CD8-positive, alpha-beta T cell (primary cell): ENCODE measurements at regions of chr7 and their contacts with region 1.

Region 1: GRCh38 chr7:43700059-43700501 is 29.2 kb downstream of the COA1 start:
- DNase-seq: peak in 2 of 9 experiments; percentile 69 to 80
- ATAC-seq: peak; percentile 73
- H3K4me3 ChIP-seq: no peak overlapping the region
- H3K4me3 Mint-ChIP-seq: peak overlapping the region; percentile 50
- H3K27ac ChIP-seq: no peak overlapping the region
- H3K27ac Mint-ChIP-seq: peak overlapping the region; percentile 84
- H3K4me1 ChIP-seq: peaks cover 37% of the 10 kb centered on the region
- H3K4me1 Mint-ChIP-seq: peaks cover 44% of the 10 kb centered on the region
- H3K27me3 ChIP-seq: no peaks in the 10 kb centered on the region
- H3K27me3 Mint-ChIP-seq: no peaks in the 10 kb centered on the region
- CTCF ChIP-seq: peak; percentile 85

Region 2: DNA sequence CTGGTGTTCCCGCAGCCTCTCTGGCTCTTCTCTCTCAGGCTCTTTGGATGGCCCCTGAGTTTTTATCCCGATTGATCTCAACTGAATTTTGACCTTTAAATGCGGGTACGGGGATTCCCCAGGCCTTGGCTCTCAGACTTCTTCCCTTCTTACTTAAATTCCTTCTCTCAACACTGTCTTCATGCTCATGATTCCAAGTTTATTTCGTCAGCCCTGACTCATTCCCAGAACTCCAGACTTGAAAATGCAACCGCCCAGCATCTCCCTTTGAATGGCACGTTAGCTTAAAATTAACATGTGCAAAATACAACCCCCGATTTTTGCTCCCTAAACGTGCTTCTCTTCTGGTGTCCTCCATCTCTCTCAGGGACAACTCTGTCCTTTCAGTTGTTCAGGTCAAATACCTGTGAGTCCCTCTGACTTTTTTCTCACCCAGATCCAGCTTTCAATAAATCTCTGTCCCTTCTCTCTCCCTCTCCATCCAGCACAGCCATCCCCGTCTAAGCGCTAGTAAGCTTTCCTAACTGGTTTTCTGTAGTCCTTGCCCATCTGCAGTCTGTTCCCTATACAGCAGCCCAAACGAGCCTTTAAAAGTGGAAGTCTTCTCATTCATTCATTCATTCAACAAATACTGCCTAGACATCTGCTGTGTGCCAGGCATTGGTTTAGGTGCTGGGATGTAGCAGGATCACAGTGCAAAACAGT is 580.6 kb before region 1 on chr7:
- CTCF ChIA-PET with region 1: no interaction called
- POLR2A ChIA-PET with region 1: no interaction called
- intact Hi-C with region 1: no loop called
- DNase-seq: no peak
- ATAC-seq: no peak
- H3K4me3 ChIP-seq: no peak overlapping the region
- H3K4me3 Mint-ChIP-seq: no peak overlapping the region
- H3K27ac ChIP-seq: no peak overlapping the region
- H3K27ac Mint-ChIP-seq: no peak overlapping the region
- H3K4me1 ChIP-seq: no peaks in the 10 kb centered on the region
- H3K4me1 Mint-ChIP-seq: no peaks in the 10 kb centered on the region
- H3K27me3 ChIP-seq: peaks cover 0 to 2% of the 10 kb centered on the region in 2 experiments
- H3K27me3 Mint-ChIP-seq: peaks cover 37% of the 10 kb centered on the region
- CTCF ChIP-seq: no peak

Region 3: GRCh38 chr7:43417455-43417854 is 282.6 kb before region 1 on chr7:
- CTCF ChIA-PET with region 1: no interaction called
- POLR2A ChIA-PET with region 1: no interaction called
- intact Hi-C with region 1: no loop called
- DNase-seq: no peak
- ATAC-seq: no peak
- H3K4me3 ChIP-seq: no peak overlapping the region
- H3K4me3 Mint-ChIP-seq: no peak overlapping the region
- H3K27ac ChIP-seq: no peak overlapping the region
- H3K27ac Mint-ChIP-seq: no peak overlapping the region
- H3K4me1 ChIP-seq: no peaks in the 10 kb centered on the region
- H3K4me1 Mint-ChIP-seq: no peaks in the 10 kb centered on the region
- H3K27me3 ChIP-seq: no peaks in the 10 kb centered on the region
- H3K27me3 Mint-ChIP-seq: peaks cover 19% of the 10 kb centered on the region
- CTCF ChIP-seq: no peak

Region 4: GRCh38 chr7:43454936-43455518 is 245.1 kb before region 1 on chr7:
- CTCF ChIA-PET with region 1: interaction called, 5 read pairs
- POLR2A ChIA-PET with region 1: no interaction called
- intact Hi-C with region 1: loop called in 1 of 2 experiments (anchors 5 kb)
- DNase-seq: peak in 2 of 9 experiments; percentile 15 to 36
- ATAC-seq: no peak
- H3K4me3 ChIP-seq: no peak overlapping the region
- H3K4me3 Mint-ChIP-seq: no peak overlapping the region
- H3K27ac ChIP-seq: no peak overlapping the region
- H3K27ac Mint-ChIP-seq: no peak overlapping the region
- H3K4me1 ChIP-seq: no peaks in the 10 kb centered on the region
- H3K4me1 Mint-ChIP-seq: peaks cover 5% of the 10 kb centered on the region
- H3K27me3 ChIP-seq: no peaks in the 10 kb centered on the region
- H3K27me3 Mint-ChIP-seq: peaks cover 4% of the 10 kb centered on the region
- CTCF ChIP-seq: peak; percentile 32

Region 5: DNA sequence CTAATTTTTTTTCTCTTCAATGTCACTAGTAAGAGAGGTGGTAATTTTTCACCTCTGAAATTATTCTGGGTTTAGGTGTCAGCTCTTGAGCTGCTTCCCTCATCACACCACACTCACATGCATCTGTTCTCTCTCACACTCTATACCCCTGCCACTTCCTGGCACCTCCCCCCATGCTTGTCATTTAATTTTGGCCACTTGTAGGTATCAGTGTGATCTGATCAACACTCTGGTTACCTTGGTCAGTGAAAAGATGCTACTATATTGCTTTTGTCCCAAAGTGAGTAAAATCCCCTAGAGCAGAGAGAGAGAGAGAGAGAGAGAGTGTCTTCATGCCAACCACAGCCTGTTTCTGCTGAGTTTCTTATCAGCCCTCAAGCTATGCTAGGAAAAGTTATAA is 74.6 kb before region 1 on chr7:
- CTCF ChIA-PET with region 1: interaction called, 20 read pairs
- POLR2A ChIA-PET with region 1: interaction called, 3 read pairs
- intact Hi-C with region 1: loop called in 1 of 2 experiments (anchors 1 kb)
- DNase-seq: peak; percentile 25 to 94 (median 61)
- ATAC-seq: peak; percentile 74
- H3K4me3 ChIP-seq: no peak overlapping the region
- H3K4me3 Mint-ChIP-seq: peak overlapping the region; percentile 71
- H3K27ac ChIP-seq: peak overlapping the region; percentile 23 to 75
- H3K27ac Mint-ChIP-seq: peak overlapping the region; percentile 94
- H3K4me1 ChIP-seq: peaks cover 94% of the 10 kb centered on the region
- H3K4me1 Mint-ChIP-seq: peaks cover 94% of the 10 kb centered on the region
- H3K27me3 ChIP-seq: no peaks in the 10 kb centered on the region
- H3K27me3 Mint-ChIP-seq: no peaks in the 10 kb centered on the region
- CTCF ChIP-seq: no peak

Region 6: DNA sequence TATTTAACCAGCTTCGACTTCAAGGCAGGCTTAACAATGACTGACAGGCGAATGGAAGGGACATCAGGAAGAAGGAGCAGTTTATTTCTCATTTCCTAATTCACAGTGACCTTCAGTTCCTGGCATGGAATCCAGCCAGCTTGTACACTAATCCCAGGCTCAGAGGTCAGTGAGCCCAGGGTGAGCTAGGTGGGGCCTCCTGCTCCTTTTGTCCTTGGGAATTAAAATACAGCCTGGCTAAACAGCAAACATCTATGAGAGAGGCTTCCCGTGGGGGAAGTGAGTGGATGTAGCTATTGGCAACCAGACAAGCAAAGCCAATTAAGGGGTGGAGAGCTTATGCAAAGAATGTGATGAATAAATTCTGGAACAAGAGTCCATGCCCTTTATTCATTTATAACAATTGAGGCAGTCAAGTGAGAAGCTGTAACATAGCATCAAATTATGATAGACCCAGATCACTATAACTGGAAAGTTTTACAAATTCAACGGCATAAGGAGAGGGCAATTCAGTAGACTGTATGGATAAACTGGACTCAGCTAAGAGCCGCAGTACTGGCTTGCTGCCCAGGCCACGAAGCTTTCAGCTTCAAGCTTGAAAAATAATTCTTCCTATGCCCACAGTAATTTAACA is 60.1 kb before region 1 on chr7:
- CTCF ChIA-PET with region 1: interaction called, 115 read pairs
- POLR2A ChIA-PET with region 1: interaction called, 6 read pairs
- intact Hi-C with region 1: no loop called
- DNase-seq: peak in 1 of 9 experiments; percentile 49
- ATAC-seq: no peak
- H3K4me3 ChIP-seq: no peak overlapping the region
- H3K4me3 Mint-ChIP-seq: peak overlapping the region; percentile 59
- H3K27ac ChIP-seq: peak overlapping the region; percentile 45 to 67
- H3K27ac Mint-ChIP-seq: peak overlapping the region; percentile 93
- H3K4me1 ChIP-seq: peaks cover 96% of the 10 kb centered on the region
- H3K4me1 Mint-ChIP-seq: peaks cover 97% of the 10 kb centered on the region
- H3K27me3 ChIP-seq: no peaks in the 10 kb centered on the region
- H3K27me3 Mint-ChIP-seq: no peaks in the 10 kb centered on the region
- CTCF ChIP-seq: no peak

Region 7: DNA sequence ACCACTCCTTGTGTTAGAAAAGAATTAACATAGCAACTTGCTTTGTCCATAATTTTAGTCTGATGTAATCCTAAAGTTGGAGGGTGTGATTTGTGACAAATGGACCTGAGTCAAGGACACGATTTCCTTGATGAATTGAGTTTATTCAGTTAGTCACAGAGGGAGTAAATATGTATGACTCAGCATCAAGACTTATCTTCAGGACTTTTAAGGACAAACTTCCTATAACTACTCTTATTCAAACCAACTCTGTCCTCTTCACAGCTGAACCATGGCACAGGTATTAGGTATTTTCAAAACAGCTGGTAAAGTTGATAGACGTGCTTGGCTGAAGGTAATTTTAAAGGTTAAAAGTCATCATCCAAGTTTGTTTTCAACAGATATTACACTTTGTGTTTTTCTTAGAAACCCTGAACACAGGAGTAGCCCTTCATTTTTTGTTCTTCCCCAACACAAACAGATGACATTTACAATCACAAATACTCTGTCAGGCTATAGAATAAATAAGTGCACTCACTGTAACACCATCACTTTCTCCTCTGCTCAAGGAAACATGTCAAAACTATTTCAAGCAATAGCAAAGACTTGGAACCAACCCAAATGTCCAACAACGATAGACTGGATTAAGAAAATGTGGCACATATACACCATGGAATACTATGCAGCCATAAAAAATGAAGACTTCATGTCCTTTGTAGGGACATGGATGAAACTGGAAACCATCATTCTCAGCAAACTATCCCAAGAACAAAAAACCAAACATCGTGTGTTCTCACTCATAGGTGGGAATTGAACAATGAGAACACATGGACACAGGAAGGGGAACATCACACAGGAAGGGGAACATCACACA is 25.3 kb before region 1 on chr7:
- CTCF ChIA-PET with region 1: interaction called, 7 read pairs
- POLR2A ChIA-PET with region 1: interaction called, 5 read pairs
- intact Hi-C with region 1: loop called (anchors 2 kb)
- DNase-seq: no peak
- ATAC-seq: no peak
- H3K4me3 ChIP-seq: no peak overlapping the region
- H3K4me3 Mint-ChIP-seq: no peak overlapping the region
- H3K27ac ChIP-seq: no peak overlapping the region
- H3K27ac Mint-ChIP-seq: no peak overlapping the region
- H3K4me1 ChIP-seq: peaks cover 38% of the 10 kb centered on the region
- H3K4me1 Mint-ChIP-seq: peaks cover 84% of the 10 kb centered on the region
- H3K27me3 ChIP-seq: no peaks in the 10 kb centered on the region
- H3K27me3 Mint-ChIP-seq: no peaks in the 10 kb centered on the region
- CTCF ChIP-seq: no peak

Region 8: DNA sequence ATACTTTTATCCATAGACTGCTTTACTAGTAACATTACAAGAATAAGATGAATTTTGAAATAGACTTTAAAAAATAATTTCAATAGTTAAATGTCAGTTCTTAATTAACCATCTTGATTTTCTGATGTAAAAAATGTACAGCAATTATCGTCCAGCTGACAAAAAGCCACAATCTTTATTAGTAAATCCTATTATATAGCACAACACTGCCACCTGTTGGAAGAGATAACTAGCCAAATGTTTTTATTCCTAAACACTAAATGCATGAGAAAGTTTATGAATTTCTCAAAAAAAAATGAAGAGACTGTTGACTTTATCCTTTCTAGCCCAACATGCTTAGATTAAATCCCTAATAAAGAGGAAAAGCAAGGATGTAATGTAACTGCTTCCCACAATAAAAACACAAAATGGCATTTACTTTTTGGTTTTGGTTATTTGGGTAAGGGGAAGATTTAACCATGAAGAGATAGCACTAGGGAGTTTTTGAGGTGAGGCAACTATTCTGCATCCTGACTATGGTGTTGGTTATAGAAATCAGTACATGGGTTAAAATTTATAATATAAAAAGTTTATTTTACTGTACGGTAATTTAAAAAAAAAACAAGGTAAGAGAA is 21.2 kb after region 1 on chr7:
- CTCF ChIA-PET with region 1: interaction called, 12 read pairs
- POLR2A ChIA-PET with region 1: no interaction called
- intact Hi-C with region 1: loop called (anchors 1 to 2 kb)
- DNase-seq: peak in 3 of 9 experiments; percentile 22 to 76 (median 69)
- ATAC-seq: peak; percentile 31
- H3K4me3 ChIP-seq: no peak overlapping the region
- H3K4me3 Mint-ChIP-seq: no peak overlapping the region
- H3K27ac ChIP-seq: no peak overlapping the region
- H3K27ac Mint-ChIP-seq: no peak overlapping the region
- H3K4me1 ChIP-seq: no peaks in the 10 kb centered on the region
- H3K4me1 Mint-ChIP-seq: peaks cover 54% of the 10 kb centered on the region
- H3K27me3 ChIP-seq: no peaks in the 10 kb centered on the region
- H3K27me3 Mint-ChIP-seq: no peaks in the 10 kb centered on the region
- CTCF ChIP-seq: peak; percentile 95

Region 9: GRCh38 chr7:43803865-43804264 is 103.8 kb after region 1 on chr7:
- CTCF ChIA-PET with region 1: no interaction called
- POLR2A ChIA-PET with region 1: no interaction called
- intact Hi-C with region 1: no loop called
- DNase-seq: no peak
- ATAC-seq: no peak
- H3K4me3 ChIP-seq: no peak overlapping the region
- H3K4me3 Mint-ChIP-seq: no peak overlapping the region
- H3K27ac ChIP-seq: no peak overlapping the region
- H3K27ac Mint-ChIP-seq: no peak overlapping the region
- H3K4me1 ChIP-seq: no peaks in the 10 kb centered on the region
- H3K4me1 Mint-ChIP-seq: peaks cover 2% of the 10 kb centered on the region
- H3K27me3 ChIP-seq: no peaks in the 10 kb centered on the region
- H3K27me3 Mint-ChIP-seq: no peaks in the 10 kb centered on the region
- CTCF ChIP-seq: no peak